ENCODE measurements at regions of chr2 and their contacts with region 1.

Region 1: GRCh38 chr2:216114714-216115557 is 5.8 kb downstream of the XRCC5 start:
- H3K4me3 ChIP-seq: peak overlapping the region; percentile 42
- H3K27ac ChIP-seq: peak overlapping the region; percentile 48
- H3K4me1 ChIP-seq: 0 out of 2 replicates have a peak, but pooled peaks cover 2% of the 10 kb centered on the region
- CTCF ChIP-seq: peak; percentile 82; the same call in 1 of the 2 replicates

Region 2: GRCh38 chr2:216081487-216082116 is 33.3 kb before region 1 on chr2 and contains the starts of genes PECR and TMEM169:
- CTCF ChIA-PET with region 1: interaction called, 4 read pairs
- POLR2A ChIA-PET with region 1: interaction called, 18 read pairs
- H3K4me3 ChIP-seq: peak within 1 kb of the TSS; percentile 80
- H3K27ac ChIP-seq: peak within 1 kb of the TSS; percentile 48; the same call in 1 of the 2 replicates
- H3K4me1 ChIP-seq: peaks cover 3% of the 10 kb centered on the region
- CTCF ChIP-seq: no peak; the same call in 1 of the 2 replicates

Region 3: DNA sequence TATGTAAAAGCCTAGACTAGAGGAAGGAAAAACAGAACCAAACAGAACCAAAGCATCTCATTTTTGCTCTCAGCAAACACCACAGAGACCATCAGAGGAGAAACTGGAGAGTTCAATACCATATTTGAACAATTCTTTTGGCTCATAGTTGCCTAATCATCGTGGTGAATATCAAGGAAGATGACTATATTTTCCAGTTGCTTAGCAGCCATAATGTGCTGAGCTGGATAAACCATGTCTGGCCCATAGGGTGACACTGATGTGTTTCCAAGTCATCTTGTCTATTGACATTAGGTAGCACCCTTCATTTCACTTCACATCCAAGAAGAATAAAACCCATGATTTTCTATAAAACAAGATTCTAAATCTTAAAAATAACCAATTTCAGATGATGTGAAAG is 11.7 kb before region 1 on chr2:
- CTCF ChIA-PET with region 1: interaction called, 12 read pairs
- POLR2A ChIA-PET with region 1: interaction called, 4 read pairs
- H3K4me3 ChIP-seq: no peak overlapping the region
- H3K27ac ChIP-seq: no peak overlapping the region
- H3K4me1 ChIP-seq: no peaks in the 10 kb centered on the region
- CTCF ChIP-seq: no peak

Region 4: GRCh38 chr2:216257089-216257488 is 142.2 kb after region 1 on chr2:
- CTCF ChIA-PET with region 1: no interaction called
- POLR2A ChIA-PET with region 1: no interaction called
- H3K4me3 ChIP-seq: no peak overlapping the region
- H3K27ac ChIP-seq: no peak overlapping the region
- H3K4me1 ChIP-seq: no peaks in the 10 kb centered on the region
- CTCF ChIP-seq: no peak

Measured in HEK293 (cell line).